ENCODE measurements at regions of chr1 and their contacts with region 1.

Region 1: DNA sequence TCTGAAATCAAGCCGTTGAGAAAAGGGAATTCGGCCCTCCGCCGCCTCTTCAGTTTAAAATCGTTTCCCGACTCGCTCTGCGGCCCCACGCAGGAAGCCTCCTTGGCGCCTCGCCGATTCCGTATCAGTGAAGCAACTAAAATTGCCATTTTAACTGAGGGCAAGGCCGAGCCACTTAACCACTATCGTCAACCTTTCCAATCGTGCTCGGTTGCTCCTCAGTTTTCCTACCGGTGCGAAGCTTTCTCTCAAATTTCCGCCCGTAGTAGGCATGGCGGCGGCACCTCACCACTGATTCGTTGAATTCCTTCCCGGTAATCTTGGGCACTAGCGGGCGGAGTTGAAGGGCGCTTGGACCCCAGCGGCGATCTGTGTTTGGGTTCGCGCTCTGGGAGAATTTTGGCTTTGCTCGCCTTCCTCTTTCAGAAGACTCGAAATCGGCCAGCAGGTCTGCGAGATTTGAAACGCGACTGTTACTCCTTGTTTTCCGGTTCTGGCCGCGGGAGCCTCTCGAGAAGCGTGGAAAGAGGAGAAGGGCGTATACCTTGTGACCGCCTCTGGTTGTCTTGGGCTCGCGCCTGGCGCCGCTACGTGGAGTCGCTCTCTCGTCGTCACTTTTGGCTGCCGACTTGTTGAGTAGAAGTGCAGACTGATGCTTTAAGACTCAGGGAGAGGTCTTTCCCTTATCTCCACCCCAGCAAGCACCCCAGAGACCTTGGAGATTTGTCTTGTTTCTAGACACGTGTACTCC is at the starts of genes CENPL and DARS2:
- DNase-seq: peak; percentile 77
- H3K4me3 ChIP-seq: peak within 1 kb of the TSS; percentile 54 to 72 (median 69)
- H3K27ac ChIP-seq: peak within 1 kb of the TSS; percentile 87 to 94 (median 92)
- H3K4me1 ChIP-seq: peaks cover 5 to 29% (median 5%) of the 10 kb centered on the region in 3 donors
- H3K27me3 ChIP-seq: no peaks in the 10 kb centered on the region
- CTCF ChIP-seq: peak in 2 of 6 experiments; percentile 9
- POLR2A ChIP-seq: peak in 3 of 4 donors; percentile 38 to 50 (median 48)
- total RNA-seq, gene CENPL: 3.6 to 18.2 (median 7.5) TPM
- total RNA-seq, gene DARS2: 6.6 to 14.7 (median 9.9) TPM

Region 2: DNA sequence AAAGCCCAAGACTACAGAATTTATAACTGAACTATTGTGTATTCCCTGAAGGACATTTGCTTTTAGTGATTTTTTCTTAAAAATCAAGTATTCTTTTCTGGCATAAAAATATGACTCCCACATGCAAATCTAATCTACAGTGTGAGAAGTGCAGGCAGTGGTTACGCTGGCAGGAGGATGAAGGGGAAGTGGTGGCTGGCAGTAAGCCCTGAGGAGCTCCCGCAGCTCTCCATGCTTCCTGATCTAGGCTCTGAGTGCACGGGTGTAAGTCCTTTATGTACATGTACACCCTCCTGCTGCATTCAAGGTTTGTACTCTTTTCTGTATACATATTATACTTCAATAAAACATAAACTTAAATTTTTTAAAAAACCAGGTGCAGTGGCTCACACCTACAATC is 414.9 kb before region 1 on chr1:
- intact Hi-C with region 1: loop called (anchors 10 kb)
- DNase-seq: no peak
- H3K4me3 ChIP-seq: no peak overlapping the region
- H3K27ac ChIP-seq: no peak overlapping the region
- H3K4me1 ChIP-seq: peaks cover 0 to 20% (median 4%) of the 10 kb centered on the region in 3 donors
- H3K27me3 ChIP-seq: no peaks in the 10 kb centered on the region
- CTCF ChIP-seq: no peak
- POLR2A ChIP-seq: no peak

Region 3: DNA sequence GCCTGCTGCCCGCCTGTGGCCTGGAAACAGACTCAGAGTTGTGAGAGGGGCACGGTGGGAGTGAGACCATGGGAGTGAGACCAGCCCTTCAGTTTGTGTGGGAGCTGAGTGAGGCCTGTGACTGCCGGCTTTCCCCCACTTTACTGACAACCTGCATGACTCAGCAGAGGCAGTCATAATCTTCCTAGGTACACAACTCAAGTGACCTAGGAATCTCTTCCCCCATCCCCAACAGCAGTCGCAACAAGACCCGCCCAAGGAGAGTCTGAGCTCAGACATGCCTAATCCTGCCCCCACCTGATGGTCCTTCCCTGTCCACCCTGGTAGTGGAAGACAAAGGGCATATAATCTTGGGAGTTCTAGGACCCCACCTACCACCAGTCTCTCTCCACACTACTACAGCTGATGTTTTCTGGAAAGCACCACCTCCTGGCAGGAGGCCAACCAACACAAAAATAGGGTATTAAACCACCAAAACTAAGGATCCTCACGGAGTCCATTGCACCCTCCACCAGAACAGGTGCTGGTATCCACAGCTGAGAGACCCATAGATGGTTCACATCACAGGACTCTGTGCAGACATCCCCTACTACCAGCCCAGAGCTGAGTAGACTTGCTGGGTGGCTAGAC is 65.4 kb before region 1 on chr1:
- intact Hi-C with region 1: no loop called
- DNase-seq: no peak
- H3K4me3 ChIP-seq: no peak overlapping the region
- H3K27ac ChIP-seq: no peak overlapping the region
- H3K4me1 ChIP-seq: no peaks in the 10 kb centered on the region
- H3K27me3 ChIP-seq: no peaks in the 10 kb centered on the region
- CTCF ChIP-seq: no peak
- POLR2A ChIP-seq: no peak

Region 4: DNA sequence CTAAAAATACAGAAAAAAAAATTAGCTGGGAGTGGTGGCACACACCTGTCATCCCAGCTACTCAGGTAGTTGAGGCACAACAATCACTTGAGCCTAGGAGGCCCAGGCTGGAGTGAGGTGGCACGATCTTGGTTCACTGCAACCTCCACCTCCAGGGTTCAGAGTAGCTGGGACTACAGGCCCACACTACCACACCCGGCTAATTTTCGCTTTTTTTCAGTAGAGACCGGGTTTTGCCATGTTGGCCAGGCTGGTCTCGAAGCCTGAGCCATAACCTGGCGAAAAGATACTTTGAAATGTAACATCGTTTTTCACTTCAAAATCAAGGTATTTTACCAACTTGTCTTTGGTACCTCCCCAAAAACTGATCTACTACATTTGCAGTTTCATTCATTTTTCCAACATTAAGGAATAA is 37.2 kb after region 1 on chr1:
- intact Hi-C with region 1: no loop called
- DNase-seq: no peak
- H3K4me3 ChIP-seq: no peak overlapping the region
- H3K27ac ChIP-seq: no peak overlapping the region
- H3K4me1 ChIP-seq: peaks cover 0 to 30% (median 20%) of the 10 kb centered on the region in 3 donors
- H3K27me3 ChIP-seq: no peaks in the 10 kb centered on the region
- CTCF ChIP-seq: no peak
- POLR2A ChIP-seq: no peak

Measured in esophagus squamous epithelium (tissue), 5 donors.